ENCODE measurements at regions of chr17 and their contacts with region 1.

Region 1: DNA sequence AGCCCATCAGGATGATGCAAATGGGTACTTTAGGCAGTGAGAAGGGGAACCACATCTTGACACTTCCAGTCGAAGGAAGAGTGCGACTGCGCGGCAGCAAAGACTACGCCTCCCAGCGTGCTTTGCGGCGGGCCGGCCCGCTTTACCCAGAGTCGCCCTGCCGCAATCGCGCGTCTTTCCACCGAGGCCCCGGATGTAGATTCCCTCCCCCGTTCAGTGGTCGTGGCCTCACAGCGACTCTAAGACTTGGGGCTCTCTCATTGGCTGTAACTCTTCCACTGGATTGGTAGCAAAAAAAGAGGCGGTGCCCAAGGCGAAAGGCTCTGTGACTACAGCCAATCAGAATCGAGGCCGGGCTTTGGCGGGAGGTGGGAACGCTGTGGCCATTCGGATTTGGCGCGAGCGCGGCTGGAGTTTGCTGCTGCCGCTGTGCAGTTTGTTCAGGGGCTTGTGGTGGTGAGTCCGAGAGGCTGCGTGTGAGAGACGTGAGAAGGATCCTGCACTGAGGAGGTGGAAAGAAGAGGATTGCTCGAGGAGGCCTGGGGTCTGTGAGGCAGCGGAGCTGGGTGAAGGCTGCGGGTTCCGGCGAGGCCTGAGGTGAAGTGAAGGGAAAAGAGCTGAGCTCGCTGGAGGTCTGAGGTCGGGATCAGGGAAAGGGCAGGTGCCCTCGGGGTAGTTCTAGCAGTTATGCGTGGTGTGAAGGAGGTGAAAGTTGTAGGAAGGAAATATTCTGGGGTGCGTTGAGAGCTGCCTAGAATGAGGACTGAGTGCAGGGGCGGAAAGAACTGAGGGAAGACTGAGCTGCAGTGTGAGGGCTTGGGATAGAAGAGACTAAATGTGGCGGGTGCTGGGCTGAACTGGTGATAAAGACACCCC is at the start of gene CDC6:
- DNase-seq: peak; percentile 92
- ATAC-seq: peak; percentile 97
- H3K4me3 ChIP-seq: peak within 1 kb of the TSS; percentile 60 to 99
- H3K27ac ChIP-seq: peak within 1 kb of the TSS; percentile 72
- H3K4me1 ChIP-seq: peaks cover 12% of the 10 kb centered on the region
- H3K27me3 ChIP-seq: no peaks in the 10 kb centered on the region
- CTCF ChIP-seq: no peak
- total RNA-seq, gene CDC6: 66.3 TPM

Region 2: DNA sequence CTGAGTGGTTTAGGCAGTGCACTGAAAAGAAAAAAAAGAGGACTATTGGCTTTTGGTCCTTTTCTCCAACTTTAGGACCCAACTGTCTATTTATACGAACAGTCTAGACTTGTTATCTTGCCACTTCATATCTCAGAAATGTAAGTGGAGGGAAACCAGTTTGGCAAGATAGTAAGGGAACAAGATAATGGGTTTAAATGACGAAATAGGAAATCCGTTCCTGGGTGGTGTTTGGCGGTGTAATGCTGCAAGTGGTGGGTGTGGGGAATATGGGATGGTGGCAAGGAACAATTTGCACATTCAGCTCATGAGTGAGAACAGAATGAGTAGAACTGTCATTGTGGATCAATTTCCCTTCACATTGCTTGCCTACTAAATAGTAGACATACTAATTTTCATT is 505.2 kb before region 1 on chr17:
- CTCF ChIA-PET with region 1: no interaction called
- POLR2A ChIA-PET with region 1: no interaction called
- in situ Hi-C with region 1: no loop called
- intact Hi-C with region 1: no loop called
- DNase-seq: no peak
- ATAC-seq: no peak
- H3K4me3 ChIP-seq: no peak overlapping the region
- H3K27ac ChIP-seq: no peak overlapping the region
- H3K4me1 ChIP-seq: no peaks in the 10 kb centered on the region
- H3K27me3 ChIP-seq: peaks cover 6% of the 10 kb centered on the region
- CTCF ChIP-seq: no peak

Region 3: GRCh38 chr17:40203131-40203530 is 84.6 kb before region 1 on chr17:
- CTCF ChIA-PET with region 1: interaction called, 13 read pairs
- POLR2A ChIA-PET with region 1: no interaction called
- in situ Hi-C with region 1: no loop called
- intact Hi-C with region 1: loop called (anchors 1 kb)
- DNase-seq: no peak
- ATAC-seq: no peak
- H3K4me3 ChIP-seq: no peak overlapping the region
- H3K27ac ChIP-seq: no peak overlapping the region
- H3K4me1 ChIP-seq: no peaks in the 10 kb centered on the region
- H3K27me3 ChIP-seq: no peaks in the 10 kb centered on the region
- CTCF ChIP-seq: no peak

Region 4: GRCh38 chr17:40243761-40244160 is 44.0 kb before region 1 on chr17:
- CTCF ChIA-PET with region 1: no interaction called
- POLR2A ChIA-PET with region 1: interaction called, 12 read pairs
- in situ Hi-C with region 1: no loop called
- intact Hi-C with region 1: no loop called
- DNase-seq: no peak
- ATAC-seq: no peak
- H3K4me3 ChIP-seq: no peak overlapping the region
- H3K27ac ChIP-seq: no peak overlapping the region
- H3K4me1 ChIP-seq: no peaks in the 10 kb centered on the region
- H3K27me3 ChIP-seq: no peaks in the 10 kb centered on the region
- CTCF ChIP-seq: no peak

Region 5: DNA sequence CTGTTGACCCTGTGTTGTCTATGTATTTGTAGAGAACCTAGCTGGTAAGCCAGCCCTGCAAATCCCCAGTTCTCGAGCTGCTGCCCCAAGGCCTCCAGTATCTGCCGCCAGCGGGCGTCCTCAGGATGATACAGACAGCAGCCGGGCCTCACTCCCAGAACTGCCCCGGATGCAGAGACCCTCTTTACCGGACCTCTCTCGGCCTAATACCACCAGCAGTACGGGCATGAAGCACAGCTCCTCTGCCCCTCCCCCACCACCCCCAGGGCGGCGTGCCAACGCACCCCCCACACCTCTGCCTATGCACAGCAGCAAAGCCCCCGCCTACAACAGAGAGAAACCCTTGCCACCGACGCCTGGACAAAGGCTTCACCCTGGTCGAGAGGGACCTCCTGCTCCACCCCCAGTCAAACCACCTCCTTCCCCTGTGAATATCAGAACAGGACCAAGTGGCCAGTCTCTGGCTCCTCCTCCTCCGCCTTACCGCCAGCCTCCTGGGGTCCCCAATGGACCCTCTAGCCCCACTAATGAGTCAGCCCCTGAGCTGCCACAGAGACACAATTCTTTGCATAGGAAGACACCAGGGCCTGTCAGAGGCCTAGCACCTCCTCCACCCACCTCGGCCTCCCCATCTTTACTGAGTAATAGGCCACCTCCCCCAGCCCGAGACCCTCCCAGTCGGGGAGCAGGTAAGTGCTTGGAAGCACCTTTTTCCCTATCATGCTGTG is 23.1 kb before region 1 on chr17:
- CTCF ChIA-PET with region 1: no interaction called
- POLR2A ChIA-PET with region 1: interaction called, 12 read pairs
- in situ Hi-C with region 1: no loop called
- intact Hi-C with region 1: no loop called
- DNase-seq: no peak
- ATAC-seq: no peak
- H3K4me3 ChIP-seq: no peak overlapping the region
- H3K27ac ChIP-seq: no peak overlapping the region
- H3K4me1 ChIP-seq: no peaks in the 10 kb centered on the region
- H3K27me3 ChIP-seq: no peaks in the 10 kb centered on the region
- CTCF ChIP-seq: no peak